ENCODE measurements at regions of chr3 and their contacts with region 1.

Region 1: GRCh38 chr3:32467333-32468070 is 35.1 kb downstream of the CMTM6 start:
- DNase-seq: peak; percentile 69
- ATAC-seq: peak; percentile 84
- H3K4me3 Mint-ChIP-seq: no peak overlapping the region
- H3K27ac Mint-ChIP-seq: no peak overlapping the region
- H3K4me1 Mint-ChIP-seq: peaks cover 37% of the 10 kb centered on the region
- H3K27me3 Mint-ChIP-seq: no peaks in the 10 kb centered on the region
- CTCF ChIP-seq: peak; percentile 97

Region 2: DNA sequence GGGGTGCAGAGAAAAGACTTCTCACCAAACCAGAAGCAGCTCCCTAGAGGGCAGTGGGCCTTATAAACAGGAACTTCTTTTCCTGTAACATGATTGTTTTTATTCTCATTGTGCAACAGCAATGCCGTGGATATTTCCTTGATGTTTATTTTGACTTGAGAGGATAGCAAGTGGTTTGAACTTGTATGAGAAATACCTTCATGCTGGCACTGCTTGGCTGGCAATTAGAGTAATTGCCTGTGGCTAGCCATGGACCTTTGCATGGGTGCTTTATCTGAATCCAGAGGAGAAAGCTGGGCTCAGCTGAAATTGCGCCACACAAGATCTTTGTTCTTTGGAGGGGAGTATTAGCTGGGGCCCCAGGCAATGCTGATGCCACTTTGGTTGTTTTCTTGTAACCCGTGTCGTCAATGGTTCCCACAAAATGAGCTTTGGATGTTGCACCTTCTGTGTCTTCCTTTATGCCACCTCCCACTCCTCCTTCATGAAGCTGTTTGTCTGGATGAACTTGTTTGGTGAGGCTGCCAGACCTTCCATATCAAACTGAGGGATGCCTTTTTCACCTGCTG is 191.1 kb before region 1 on chr3:
- CTCF ChIA-PET with region 1: no interaction called
- POLR2A ChIA-PET with region 1: no interaction called
- intact Hi-C with region 1: no loop called
- DNase-seq: no peak
- ATAC-seq: no peak
- H3K4me3 Mint-ChIP-seq: no peak overlapping the region
- H3K27ac Mint-ChIP-seq: no peak overlapping the region
- H3K4me1 Mint-ChIP-seq: no peaks in the 10 kb centered on the region
- H3K27me3 Mint-ChIP-seq: no peaks in the 10 kb centered on the region
- CTCF ChIP-seq: no peak

Region 3: GRCh38 chr3:32374788-32375595 is 92.5 kb before region 1 on chr3:
- CTCF ChIA-PET with region 1: interaction called, 149 read pairs
- POLR2A ChIA-PET with region 1: interaction called, 6 read pairs
- intact Hi-C with region 1: no loop called
- DNase-seq: peak; percentile 83
- ATAC-seq: peak; percentile 68
- H3K4me3 Mint-ChIP-seq: no peak overlapping the region
- H3K27ac Mint-ChIP-seq: no peak overlapping the region
- H3K4me1 Mint-ChIP-seq: peaks cover 24% of the 10 kb centered on the region
- H3K27me3 Mint-ChIP-seq: no peaks in the 10 kb centered on the region
- CTCF ChIP-seq: peak; percentile 76

Region 4: DNA sequence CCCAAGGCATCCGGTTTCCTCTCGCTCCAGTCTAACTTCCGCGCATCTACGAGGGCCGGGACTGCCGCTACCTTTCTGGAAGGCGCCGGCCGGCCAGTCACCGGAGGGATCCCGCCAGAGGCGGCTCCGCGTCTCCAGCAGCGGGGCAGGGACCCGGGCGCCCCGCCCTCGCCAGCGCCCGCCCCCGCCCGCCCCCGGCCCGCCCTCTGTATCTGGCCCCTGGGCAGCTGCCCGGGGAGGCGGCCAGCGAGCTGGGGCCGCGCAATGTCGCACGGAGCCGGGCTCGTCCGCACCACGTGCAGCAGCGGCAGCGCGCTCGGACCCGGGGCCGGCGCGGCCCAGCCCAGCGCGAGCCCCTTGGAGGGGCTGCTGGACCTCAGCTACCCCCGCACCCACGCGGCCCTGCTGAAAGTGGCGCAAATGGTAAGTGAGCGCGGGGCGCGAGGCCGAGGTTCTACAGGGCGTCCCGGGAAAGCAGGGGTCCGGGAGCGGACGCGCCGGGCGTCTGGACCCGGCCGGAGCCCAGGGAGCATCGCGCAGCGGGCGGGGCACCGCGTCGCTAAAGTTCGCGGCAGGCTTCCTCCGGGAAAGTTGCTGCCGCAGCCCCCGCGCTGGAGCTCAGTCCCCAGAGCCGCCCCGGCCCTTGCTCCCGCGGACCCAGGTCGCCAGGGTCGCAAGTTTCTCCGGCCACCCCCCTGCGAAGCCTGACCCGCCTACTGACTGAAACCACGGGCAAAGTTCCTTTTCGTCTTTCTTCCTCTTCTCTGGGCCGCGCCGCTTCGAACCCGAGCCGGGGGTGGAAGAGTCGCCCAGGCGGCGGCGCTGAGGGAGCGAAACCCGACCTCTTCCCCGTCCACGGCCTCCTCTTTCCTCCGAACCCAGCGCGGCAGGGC is 75.6 kb before region 1 on chr3 and contains the start of gene CMTM7:
- CTCF ChIA-PET with region 1: interaction called, 56 read pairs
- POLR2A ChIA-PET with region 1: no interaction called
- intact Hi-C with region 1: loop called (anchors 5 kb)
- DNase-seq: peak; percentile 48
- ATAC-seq: peak; percentile 67
- H3K4me3 Mint-ChIP-seq: peak within 1 kb of the TSS; percentile 87
- H3K27ac Mint-ChIP-seq: peak within 1 kb of the TSS; percentile 92
- H3K4me1 Mint-ChIP-seq: peaks cover 54% of the 10 kb centered on the region
- H3K27me3 Mint-ChIP-seq: no peaks in the 10 kb centered on the region
- CTCF ChIP-seq: no peak
- total RNA-seq, gene CMTM7: 36.1 to 37.2 TPM

Region 5: GRCh38 chr3:32406486-32407408 is 60.8 kb before region 1 on chr3:
- CTCF ChIA-PET with region 1: interaction called, 47 read pairs
- POLR2A ChIA-PET with region 1: no interaction called
- intact Hi-C with region 1: no loop called
- DNase-seq: no peak
- ATAC-seq: no peak
- H3K4me3 Mint-ChIP-seq: no peak overlapping the region
- H3K27ac Mint-ChIP-seq: peak overlapping the region; percentile 48
- H3K4me1 Mint-ChIP-seq: peaks cover 74% of the 10 kb centered on the region
- H3K27me3 Mint-ChIP-seq: no peaks in the 10 kb centered on the region
- CTCF ChIP-seq: no peak

Region 6: GRCh38 chr3:32420126-32421038 is 47.1 kb before region 1 on chr3:
- CTCF ChIA-PET with region 1: interaction called, 47 read pairs
- POLR2A ChIA-PET with region 1: interaction called, 14 read pairs
- intact Hi-C with region 1: loop called (anchors 5 kb)
- DNase-seq: peak; percentile 76
- ATAC-seq: peak; percentile 81
- H3K4me3 Mint-ChIP-seq: peak overlapping the region; percentile 67
- H3K27ac Mint-ChIP-seq: peak overlapping the region; percentile 93
- H3K4me1 Mint-ChIP-seq: peaks cover 93% of the 10 kb centered on the region
- H3K27me3 Mint-ChIP-seq: no peaks in the 10 kb centered on the region
- CTCF ChIP-seq: no peak

Region 7: DNA sequence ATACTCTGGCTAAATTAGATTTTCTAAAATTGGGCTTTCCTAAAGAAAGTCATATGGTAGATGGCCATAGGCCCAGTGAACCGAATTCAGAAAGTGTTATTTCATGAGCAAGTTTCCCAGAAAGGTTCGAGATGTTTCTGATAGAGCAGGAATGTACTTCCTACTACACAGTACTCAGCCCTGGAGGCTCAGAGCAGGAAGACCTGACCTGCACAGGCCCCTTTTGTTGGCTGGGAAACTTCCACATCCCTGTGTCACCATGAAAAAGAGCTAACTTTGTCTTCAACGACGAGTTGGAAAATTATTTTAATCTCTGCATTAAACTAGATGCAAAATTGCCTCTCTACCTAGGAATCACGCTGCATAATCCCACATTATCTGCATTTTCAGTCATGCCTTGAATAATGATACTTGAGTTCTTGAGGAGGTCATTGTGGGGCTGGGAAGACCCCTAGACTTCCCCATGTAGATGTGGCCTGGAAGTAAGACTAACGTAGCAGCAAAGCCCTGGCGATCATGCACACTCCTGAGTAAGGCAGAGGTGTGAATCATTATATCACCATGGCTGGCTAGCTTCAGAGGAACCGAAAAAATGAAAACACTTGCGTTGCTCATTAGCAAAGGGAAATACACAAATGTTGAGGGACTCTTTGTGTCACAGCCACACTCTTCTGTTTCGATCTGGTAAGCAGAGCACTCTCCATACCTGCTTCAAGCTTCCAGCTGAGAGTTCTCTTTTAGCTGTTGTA is 28.7 kb before region 1 on chr3:
- CTCF ChIA-PET with region 1: interaction called, 19 read pairs
- POLR2A ChIA-PET with region 1: interaction called, 3 read pairs
- intact Hi-C with region 1: no loop called
- DNase-seq: peak; percentile 64
- ATAC-seq: peak; percentile 77
- H3K4me3 Mint-ChIP-seq: peak overlapping the region; percentile 11
- H3K27ac Mint-ChIP-seq: peak overlapping the region; percentile 81
- H3K4me1 Mint-ChIP-seq: peaks cover 83% of the 10 kb centered on the region
- H3K27me3 Mint-ChIP-seq: no peaks in the 10 kb centered on the region
- CTCF ChIP-seq: no peak

Region 8: DNA sequence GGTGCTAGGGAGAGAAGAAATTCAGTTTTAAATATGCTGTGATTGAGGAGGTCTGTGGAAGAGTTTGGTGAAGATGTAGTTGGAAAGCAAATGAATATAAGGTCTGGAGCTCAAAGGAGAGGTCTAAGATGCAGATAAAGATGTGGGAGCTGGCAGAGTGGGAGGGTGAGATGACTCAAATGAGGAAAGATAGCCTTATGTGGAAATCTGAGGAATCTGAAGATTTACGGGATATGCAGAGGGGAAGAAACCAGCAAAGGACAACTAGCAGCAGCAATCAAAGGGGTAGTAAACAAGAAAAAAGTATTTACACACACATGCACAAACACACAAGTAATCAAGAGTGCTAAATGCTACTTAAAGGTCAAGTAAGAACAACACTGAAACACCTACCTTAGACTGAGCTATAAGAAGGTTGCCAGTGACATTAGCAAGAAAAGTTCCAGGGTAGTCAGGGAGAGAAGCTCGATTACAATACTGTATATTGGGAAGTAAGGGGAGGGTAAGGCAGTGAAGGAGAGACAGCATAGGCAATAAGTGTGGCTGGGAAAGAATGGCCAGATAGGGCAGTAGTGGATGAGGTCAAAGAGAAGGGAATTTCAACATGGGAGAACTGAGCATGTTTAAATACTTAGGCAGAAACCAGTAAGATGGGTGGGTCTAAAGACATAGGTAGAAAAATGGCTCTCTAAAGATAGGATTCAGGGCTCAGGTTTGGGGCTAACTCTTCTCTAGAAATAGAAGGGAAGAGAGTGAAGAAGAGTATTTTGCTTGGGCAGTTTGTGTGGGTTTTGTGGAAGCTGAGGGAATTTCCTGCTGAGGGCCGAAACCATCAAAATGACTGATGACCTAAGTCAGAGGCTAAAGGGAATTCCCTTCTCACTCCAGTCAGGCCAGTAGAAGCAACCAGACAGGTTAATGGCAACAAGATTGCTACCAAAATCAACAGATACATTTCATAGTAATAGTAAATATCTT is 26.2 kb after region 1 on chr3:
- CTCF ChIA-PET with region 1: interaction called, 11 read pairs
- POLR2A ChIA-PET with region 1: interaction called, 3 read pairs
- intact Hi-C with region 1: no loop called
- DNase-seq: no peak
- ATAC-seq: peak; percentile 51
- H3K4me3 Mint-ChIP-seq: no peak overlapping the region
- H3K27ac Mint-ChIP-seq: no peak overlapping the region
- H3K4me1 Mint-ChIP-seq: peaks cover 11% of the 10 kb centered on the region
- H3K27me3 Mint-ChIP-seq: no peaks in the 10 kb centered on the region
- CTCF ChIP-seq: no peak

Region 9: GRCh38 chr3:32758375-32758753 is 290.9 kb after region 1 on chr3:
- CTCF ChIA-PET with region 1: no interaction called
- POLR2A ChIA-PET with region 1: no interaction called
- intact Hi-C with region 1: no loop called
- DNase-seq: no peak
- ATAC-seq: peak; percentile 30
- H3K4me3 Mint-ChIP-seq: no peak overlapping the region
- H3K27ac Mint-ChIP-seq: no peak overlapping the region
- H3K4me1 Mint-ChIP-seq: peaks cover 4% of the 10 kb centered on the region
- H3K27me3 Mint-ChIP-seq: no peaks in the 10 kb centered on the region
- CTCF ChIP-seq: no peak